BJ (cell line): ENCODE measurements at regions of chr3 and their contacts with region 1.

Region 1: DNA sequence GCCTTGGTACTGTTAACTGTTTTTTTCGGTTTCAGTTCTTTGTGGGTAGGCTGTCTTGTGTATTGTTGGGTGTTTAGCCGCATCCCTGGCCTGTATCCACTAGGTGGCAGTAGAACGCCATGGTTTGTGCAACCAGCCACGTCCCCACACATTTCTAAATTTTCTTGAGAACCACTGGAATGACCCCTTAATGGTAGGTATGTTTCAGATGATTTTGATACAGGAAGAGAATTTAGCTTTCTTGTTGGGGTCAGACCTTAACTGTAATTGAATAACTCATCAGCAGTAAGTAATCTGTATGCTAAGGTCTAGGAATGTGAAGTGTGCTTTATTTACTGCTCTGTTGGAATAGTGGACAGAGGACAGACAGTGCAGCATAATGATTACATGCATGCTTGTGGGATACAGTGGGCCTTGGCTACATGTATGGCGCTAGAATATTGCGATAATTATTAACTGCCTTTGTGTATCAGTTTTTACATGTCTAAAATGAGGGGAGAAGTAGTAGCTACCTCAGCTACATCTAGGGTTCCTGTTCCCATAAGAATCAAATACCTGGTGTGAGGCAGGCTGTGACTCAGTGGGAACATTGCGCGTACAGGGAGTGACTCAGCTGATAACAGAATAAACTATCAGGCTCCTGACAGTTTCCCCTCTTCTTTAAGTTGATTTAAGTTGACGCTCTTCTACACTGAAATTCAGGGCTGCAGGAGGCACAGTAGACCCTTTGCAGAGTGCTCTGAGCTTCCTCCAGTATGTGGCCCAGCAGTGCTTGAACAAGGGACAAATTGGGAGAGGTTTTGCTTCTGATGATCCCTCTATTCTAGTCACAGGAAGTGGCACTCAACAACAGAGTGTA is 25.0 kb upstream of the GPR171 start:
- DNase-seq: no peak
- H3K4me3 ChIP-seq: no peak overlapping the region
- H3K27me3 ChIP-seq: no peaks in the 10 kb centered on the region
- CTCF ChIP-seq: peak; percentile 93

Region 2: DNA sequence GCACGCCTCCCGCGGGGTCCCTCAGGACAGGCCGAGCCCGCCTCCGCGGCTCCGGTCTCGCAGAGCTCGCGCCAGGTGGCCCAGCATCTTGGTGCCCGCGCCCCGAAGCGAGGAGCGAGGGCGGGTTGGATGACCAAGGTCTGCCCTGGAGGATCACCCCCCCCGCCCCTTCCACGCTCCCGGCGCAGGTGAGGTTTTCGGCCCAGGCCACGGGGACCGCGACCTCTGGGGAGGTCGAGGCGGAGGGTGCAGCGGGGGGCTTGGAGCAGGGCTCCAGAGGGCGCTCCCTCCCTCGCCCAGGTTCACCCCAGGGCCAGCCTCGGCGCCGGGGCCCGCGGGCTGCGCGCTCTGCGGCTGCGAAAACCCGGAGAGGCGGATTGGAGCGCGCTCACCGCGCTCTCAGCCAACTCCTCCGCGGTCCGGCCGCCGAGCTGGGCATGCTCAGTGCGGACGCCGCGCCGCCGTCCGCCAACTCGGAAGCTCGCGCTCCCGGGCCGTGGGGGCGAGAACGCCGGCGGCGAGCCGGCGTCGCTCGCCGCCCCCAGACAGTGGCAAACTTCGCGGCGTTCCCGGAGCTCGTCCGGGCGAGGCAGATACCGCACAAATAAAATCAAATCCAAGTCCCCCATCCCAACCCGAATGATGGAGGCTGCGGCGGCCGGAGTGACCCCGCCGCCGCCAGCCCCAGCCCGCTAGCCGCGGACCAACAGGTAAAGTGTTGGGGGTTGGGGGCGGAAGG is 142.6 kb before region 1 on chr3 and contains the start of gene MED12L:
- CTCF ChIA-PET with region 1: no interaction called
- POLR2A ChIA-PET with region 1: no interaction called
- DNase-seq: peak; percentile 1
- H3K4me3 ChIP-seq: peak within 1 kb of the TSS; percentile 50
- H3K27me3 ChIP-seq: peaks cover 18% of the 10 kb centered on the region
- CTCF ChIP-seq: no peak
- polyA plus RNA-seq, gene MED12L: 0.06 and 0.28 TPM in 2 replicates

Region 3: DNA sequence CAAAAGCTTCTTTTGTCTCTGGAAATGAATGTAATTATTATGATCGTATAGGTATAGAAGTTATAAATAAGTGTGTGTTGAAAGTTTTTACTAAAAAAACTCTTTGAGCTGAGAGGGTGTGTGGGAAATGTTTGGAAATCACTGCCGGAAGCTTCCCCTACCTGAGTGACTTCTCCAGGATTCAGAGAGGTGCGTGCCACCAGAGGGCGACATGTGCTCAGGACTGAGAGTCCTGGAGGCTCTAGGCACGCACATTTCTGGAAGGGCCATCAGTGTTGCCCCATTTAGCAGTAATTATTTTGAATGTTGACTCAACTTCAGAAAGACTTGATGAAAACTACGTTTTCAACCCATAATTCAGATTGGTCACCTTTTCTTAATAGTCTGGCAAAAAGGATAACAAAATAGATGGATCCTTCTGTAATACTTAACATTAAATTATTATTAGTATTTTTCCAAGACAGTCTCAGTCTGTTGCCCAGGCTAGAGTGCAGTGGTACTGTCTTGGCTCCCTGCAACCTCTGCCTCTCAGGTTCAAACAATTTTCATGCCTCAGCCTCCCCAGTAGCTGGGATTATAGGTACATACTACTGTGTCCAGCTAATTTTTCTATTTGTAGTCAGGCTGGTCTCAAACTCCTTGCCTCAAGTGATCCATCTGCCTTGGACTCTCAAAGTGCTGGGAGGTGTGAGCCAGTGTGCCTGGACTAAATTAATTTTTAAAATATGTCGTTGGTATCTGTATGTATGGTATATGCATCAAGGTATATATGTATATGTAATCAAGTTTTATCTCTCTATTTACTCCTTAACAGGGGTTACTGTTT is 59.6 kb before region 1 on chr3:
- CTCF ChIA-PET with region 1: interaction called, 44 read pairs
- POLR2A ChIA-PET with region 1: no interaction called
- DNase-seq: no peak
- H3K4me3 ChIP-seq: no peak overlapping the region
- H3K27me3 ChIP-seq: no peaks in the 10 kb centered on the region
- CTCF ChIP-seq: peak; percentile 85

Region 4: GRCh38 chr3:151192545-151192944 is 35.5 kb before region 1 on chr3:
- CTCF ChIA-PET with region 1: no interaction called
- POLR2A ChIA-PET with region 1: no interaction called
- DNase-seq: no peak
- H3K4me3 ChIP-seq: no peak overlapping the region
- H3K27me3 ChIP-seq: no peaks in the 10 kb centered on the region
- CTCF ChIP-seq: no peak

Region 5: GRCh38 chr3:151248772-151249337 is 20.8 kb after region 1 on chr3:
- CTCF ChIA-PET with region 1: interaction called, 10 read pairs
- POLR2A ChIA-PET with region 1: no interaction called
- DNase-seq: no peak
- H3K4me3 ChIP-seq: no peak overlapping the region
- H3K27me3 ChIP-seq: peaks cover 1% of the 10 kb centered on the region
- CTCF ChIP-seq: no peak

Region 6: GRCh38 chr3:151276038-151276686 is 48.1 kb after region 1 on chr3:
- CTCF ChIA-PET with region 1: interaction called, 80 read pairs
- POLR2A ChIA-PET with region 1: no interaction called
- DNase-seq: no peak
- H3K4me3 ChIP-seq: no peak overlapping the region
- H3K27me3 ChIP-seq: no peaks in the 10 kb centered on the region
- CTCF ChIP-seq: no peak

Region 7: DNA sequence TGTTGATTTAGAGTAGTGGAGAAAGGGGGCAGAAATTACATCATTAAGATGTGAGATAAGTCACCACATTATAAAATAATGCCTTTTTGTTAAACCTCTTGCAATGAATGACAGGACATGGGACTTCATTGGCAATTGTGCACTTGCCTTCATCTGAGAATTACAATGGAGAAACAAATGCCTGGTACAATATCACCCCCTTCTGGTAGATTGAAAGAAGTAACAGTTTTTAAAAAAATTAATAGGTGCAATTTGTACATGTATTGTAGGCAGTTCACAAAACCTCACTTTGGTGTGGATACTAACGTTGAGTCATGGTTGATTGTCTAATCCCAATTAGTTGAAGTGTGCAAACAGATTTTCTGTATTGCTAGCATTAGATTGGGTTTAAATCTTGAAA is 54.9 kb after region 1 on chr3:
- CTCF ChIA-PET with region 1: interaction called, 80 read pairs
- POLR2A ChIA-PET with region 1: no interaction called
- DNase-seq: no peak
- H3K4me3 ChIP-seq: no peak overlapping the region
- H3K27me3 ChIP-seq: no peaks in the 10 kb centered on the region
- CTCF ChIP-seq: peak; percentile 57

Region 8: DNA sequence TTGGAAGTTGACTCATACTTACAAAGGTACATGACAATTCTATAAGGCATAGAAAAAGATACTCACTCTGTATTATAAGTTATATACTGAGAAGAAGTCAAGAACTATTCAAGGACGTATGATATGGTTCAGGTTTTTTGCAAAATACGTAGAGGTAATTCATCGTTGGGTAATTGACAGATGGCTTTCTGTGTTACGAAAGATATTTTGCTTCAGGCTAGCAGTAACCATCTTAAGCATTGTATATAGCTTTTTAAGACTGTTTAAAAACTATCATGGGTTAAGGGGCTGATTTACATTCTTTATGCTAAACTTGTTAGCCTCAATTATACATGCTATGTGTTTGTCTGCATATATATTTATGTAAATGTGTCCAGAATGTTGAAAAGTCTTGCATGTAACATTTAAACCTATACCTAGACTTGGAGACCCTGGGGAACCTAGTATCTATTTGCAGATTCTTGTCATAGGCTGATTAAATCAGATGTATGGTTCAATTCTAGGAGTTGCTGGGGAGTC is 61.3 kb after region 1 on chr3:
- CTCF ChIA-PET with region 1: interaction called, 29 read pairs
- POLR2A ChIA-PET with region 1: no interaction called
- DNase-seq: no peak
- H3K4me3 ChIP-seq: no peak overlapping the region
- H3K27me3 ChIP-seq: no peaks in the 10 kb centered on the region
- CTCF ChIP-seq: no peak

Region 9: GRCh38 chr3:151439652-151440129 is 211.7 kb after region 1 on chr3:
- CTCF ChIA-PET with region 1: no interaction called
- POLR2A ChIA-PET with region 1: no interaction called
- DNase-seq: peak; percentile 13
- H3K4me3 ChIP-seq: no peak overlapping the region
- H3K27me3 ChIP-seq: no peaks in the 10 kb centered on the region
- CTCF ChIP-seq: peak; percentile 70